ENCODE measurements at regions of chr6 and their contacts with region 1.

Region 1: GRCh38 chr6:21213492-21213891 is 380.1 kb upstream of the SOX4 start:
- DNase-seq: no peak
- H3K4me3 ChIP-seq: no peak overlapping the region
- H3K27ac ChIP-seq: no peak overlapping the region
- H3K4me1 ChIP-seq: no peaks in the 10 kb centered on the region
- H3K27me3 ChIP-seq: no peaks in the 10 kb centered on the region
- CTCF ChIP-seq: no peak
- EP300 ChIP-seq: no peak
- POLR2A ChIP-seq: no peak

Region 2: DNA sequence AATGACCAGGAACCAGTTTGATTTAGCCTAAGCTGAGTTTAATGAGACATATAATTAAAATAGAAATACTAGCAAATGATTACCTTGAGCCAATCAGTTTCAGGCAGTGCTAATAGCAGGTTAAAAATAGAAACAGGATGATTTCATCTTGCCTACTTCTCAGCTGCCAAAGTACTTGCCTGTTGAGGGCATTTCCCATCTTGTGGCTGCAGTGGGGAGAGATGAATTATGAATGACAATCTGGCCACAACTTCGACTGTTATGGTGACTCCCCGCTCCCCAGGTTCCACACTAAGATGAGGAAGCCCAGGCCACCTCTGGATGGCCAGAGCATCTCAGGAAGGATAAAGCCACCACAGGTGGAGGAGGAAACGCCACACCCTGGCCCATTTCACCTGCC is 1032.6 kb before region 1 on chr6:
- intact Hi-C with region 1: no loop called
- DNase-seq: no peak
- H3K4me3 ChIP-seq: no peak overlapping the region
- H3K27ac ChIP-seq: no peak overlapping the region
- H3K4me1 ChIP-seq: no peaks in the 10 kb centered on the region
- H3K27me3 ChIP-seq: no peaks in the 10 kb centered on the region
- CTCF ChIP-seq: no peak
- EP300 ChIP-seq: no peak
- POLR2A ChIP-seq: no peak

Region 3: DNA sequence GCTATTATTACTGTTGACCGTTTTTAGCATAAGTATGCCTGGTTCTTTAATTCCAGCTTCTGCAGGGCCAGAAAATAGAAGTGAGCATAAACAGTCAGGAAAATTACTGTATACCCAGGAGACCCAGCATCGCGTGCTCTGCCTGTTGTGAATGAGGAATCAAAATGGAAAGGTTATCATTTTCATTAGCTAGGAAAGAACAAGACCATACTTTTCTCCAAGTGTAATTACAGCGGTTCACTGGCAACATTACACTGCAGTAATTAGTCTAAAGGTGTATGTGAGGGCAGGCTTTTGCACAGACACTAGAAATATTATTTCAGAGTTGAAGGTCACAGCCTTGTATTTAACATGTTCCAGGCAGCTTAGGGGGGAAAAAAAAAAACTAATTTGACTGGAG is 23.7 kb before region 1 on chr6:
- intact Hi-C with region 1: loop called in 1 of 4 experiments (anchors 2 kb)
- DNase-seq: no peak
- H3K4me3 ChIP-seq: no peak overlapping the region
- H3K27ac ChIP-seq: no peak overlapping the region
- H3K4me1 ChIP-seq: peaks cover 6% of the 10 kb centered on the region
- H3K27me3 ChIP-seq: no peaks in the 10 kb centered on the region
- CTCF ChIP-seq: no peak
- EP300 ChIP-seq: no peak
- POLR2A ChIP-seq: no peak

Region 4: DNA sequence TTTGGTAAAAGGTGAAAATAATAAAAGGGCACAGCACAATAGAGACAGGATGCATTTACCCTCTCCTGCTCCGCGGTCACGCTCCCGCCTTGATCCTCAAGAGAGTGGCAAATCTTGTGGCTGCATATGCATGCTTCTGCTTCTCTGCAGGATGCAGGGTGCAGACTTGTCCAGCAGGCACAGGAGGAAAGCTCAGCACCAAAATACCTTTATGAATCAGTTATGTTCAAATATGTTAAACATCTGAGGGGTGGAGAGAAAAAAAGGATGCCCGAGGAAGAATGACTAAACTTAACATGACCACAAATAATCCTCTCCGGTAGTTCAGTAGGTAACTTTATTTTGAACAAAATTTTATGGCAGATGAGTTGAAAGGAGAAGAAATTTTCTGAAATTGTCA is 14.0 kb after region 1 on chr6:
- intact Hi-C with region 1: no loop called
- DNase-seq: no peak
- H3K4me3 ChIP-seq: no peak overlapping the region
- H3K27ac ChIP-seq: no peak overlapping the region
- H3K4me1 ChIP-seq: no peaks in the 10 kb centered on the region
- H3K27me3 ChIP-seq: no peaks in the 10 kb centered on the region
- CTCF ChIP-seq: no peak
- EP300 ChIP-seq: no peak
- POLR2A ChIP-seq: no peak